ENCODE measurements at regions of chr1 and their contacts with region 1.

Region 1: GRCh38 chr1:9573723-9574122 is 15.0 kb upstream of the TMEM201 start:
- DNase-seq: no peak
- ATAC-seq: no peak
- H3K4me3 ChIP-seq: no peak overlapping the region
- H3K27ac ChIP-seq: no peak overlapping the region
- H3K4me1 ChIP-seq: no peaks in the 10 kb centered on the region
- H3K27me3 ChIP-seq: no peaks in the 10 kb centered on the region
- CTCF ChIP-seq: peak; percentile 32

Region 2: GRCh38 chr1:9428601-9429341 is 145.0 kb before region 1 on chr1:
- intact Hi-C with region 1: no loop called
- DNase-seq: peak; percentile 99
- ATAC-seq: peak; percentile 98 to 99
- H3K4me3 ChIP-seq: peak overlapping the region; percentile 54
- H3K27ac ChIP-seq: peak overlapping the region; percentile 70
- H3K4me1 ChIP-seq: peaks cover 14% of the 10 kb centered on the region
- H3K27me3 ChIP-seq: no peaks in the 10 kb centered on the region
- CTCF ChIP-seq: peak; percentile 21

Region 3: GRCh38 chr1:9494929-9495758 is 78.6 kb before region 1 on chr1:
- intact Hi-C with region 1: loop called (anchors 10 kb)
- DNase-seq: peak; percentile 74
- ATAC-seq: peak; percentile 79 to 88
- H3K4me3 ChIP-seq: peak overlapping the region; percentile 30
- H3K27ac ChIP-seq: no peak overlapping the region
- H3K4me1 ChIP-seq: peaks cover 13% of the 10 kb centered on the region
- H3K27me3 ChIP-seq: no peaks in the 10 kb centered on the region
- CTCF ChIP-seq: peak; percentile 99

Region 4: DNA sequence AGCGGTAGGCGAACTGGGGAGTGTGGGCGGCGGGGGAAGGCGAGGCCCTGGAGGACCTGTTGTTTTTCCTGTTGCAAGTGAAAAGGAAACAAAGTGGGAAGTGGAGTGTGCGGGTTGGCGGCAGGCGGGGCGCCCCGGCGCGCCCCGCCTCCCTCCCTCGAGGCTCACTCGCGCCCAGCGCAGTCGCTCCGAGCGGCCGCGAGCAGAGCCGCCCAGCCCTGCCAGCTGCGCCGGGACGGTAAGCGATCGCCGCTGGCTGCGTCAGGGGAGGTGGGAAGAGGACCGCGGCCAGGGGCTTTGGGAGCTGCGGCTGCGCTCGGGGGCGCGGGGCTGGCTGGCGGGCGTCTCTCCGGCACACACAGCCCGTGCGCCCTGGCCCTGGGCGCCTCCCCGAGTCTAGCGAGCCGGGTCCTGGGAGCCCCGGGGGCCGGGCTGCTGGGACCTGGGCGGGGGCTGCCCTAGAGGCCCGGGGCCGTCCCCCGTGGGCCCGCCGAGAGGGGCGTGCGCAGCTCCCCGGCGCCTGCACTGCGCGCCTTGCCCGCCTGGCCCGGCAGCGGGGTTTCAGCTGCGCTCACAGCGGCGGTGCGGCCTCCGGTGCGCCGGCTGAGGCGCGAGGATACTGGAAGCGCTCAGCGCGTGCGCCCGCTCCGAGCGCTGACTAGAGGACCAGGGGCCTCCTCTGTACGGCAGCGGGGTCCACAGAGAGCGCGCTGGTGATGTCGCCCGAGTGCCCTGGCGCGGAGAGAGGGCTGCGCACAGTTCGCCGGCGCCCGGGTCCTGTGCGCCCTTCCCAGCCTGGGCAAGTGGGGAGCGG is 78.0 kb after region 1 on chr1 and contains the start of gene PIK3CD:
- intact Hi-C with region 1: no loop called
- DNase-seq: peak; percentile 66
- ATAC-seq: peak; percentile 67 to 75
- H3K4me3 ChIP-seq: peak within 1 kb of the TSS; percentile 64
- H3K27ac ChIP-seq: peak within 1 kb of the TSS; percentile 80
- H3K4me1 ChIP-seq: peaks cover 17% of the 10 kb centered on the region
- H3K27me3 ChIP-seq: peaks cover 17% of the 10 kb centered on the region
- CTCF ChIP-seq: no peak
- total RNA-seq, gene PIK3CD: 28.3 TPM

Measured in lower lobe of right lung (tissue), 2 donors.